ENCODE measurements at regions of chr1 and their contacts with region 1.

Region 1: DNA sequence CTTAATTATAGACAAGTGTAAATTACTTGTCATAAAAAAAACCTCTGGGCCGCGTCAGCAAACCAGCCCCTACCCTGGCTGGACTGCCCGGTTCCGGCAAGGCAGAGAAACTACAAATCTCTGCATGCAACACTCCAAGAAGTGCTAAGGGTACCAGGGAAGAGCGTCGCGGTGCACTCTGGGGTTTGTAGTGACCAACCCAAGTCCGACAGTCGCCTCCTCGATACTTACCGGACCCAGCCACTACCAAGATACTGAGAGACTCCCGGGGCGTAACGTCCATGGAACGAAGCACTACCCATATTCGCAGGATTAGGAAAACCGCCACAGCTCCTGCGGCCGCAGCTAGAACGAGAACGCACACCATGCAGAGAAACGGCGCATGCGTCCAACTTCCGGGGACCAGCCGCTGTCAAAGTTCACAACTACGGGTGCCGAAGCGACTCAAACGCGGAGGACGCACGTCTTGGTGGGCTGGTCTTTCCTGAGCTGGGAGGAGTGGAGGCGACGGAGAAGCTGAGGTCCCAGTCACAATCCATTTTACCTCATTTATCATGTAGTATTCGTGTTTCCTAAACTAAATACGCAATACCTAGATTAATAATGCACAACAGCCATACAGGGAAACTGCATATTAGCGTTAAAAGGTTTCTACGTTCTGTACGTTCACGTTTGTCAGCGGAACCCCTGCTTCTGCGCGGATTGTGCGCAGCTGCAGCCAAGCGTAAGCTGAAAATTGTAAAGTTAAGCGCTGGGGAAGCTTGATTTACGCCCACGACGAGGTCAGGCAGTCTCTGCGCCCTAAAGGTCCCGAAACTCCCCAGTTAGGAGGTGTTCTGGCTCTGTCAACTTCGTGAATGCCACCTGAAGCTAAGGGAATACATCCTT is at the start of gene ALG14:
- DNase-seq: peak; percentile 94
- ATAC-seq: peak; percentile 98
- H3K4me3 ChIP-seq: peak within 1 kb of the TSS; percentile 78 to 88
- H3K27ac ChIP-seq: peak within 1 kb of the TSS; percentile 74
- H3K4me1 ChIP-seq: peaks cover 0 to 12% of the 10 kb centered on the region in 2 experiments; a peak in 2 of 4 replicates
- H3K27me3 ChIP-seq: no peaks in the 10 kb centered on the region
- CTCF ChIP-seq: no peak
- POLR2A ChIP-seq: peak; percentile 74
- RAD21 ChIP-seq: no peak
- total RNA-seq, gene ALG14: 5.7 TPM

Region 2: DNA sequence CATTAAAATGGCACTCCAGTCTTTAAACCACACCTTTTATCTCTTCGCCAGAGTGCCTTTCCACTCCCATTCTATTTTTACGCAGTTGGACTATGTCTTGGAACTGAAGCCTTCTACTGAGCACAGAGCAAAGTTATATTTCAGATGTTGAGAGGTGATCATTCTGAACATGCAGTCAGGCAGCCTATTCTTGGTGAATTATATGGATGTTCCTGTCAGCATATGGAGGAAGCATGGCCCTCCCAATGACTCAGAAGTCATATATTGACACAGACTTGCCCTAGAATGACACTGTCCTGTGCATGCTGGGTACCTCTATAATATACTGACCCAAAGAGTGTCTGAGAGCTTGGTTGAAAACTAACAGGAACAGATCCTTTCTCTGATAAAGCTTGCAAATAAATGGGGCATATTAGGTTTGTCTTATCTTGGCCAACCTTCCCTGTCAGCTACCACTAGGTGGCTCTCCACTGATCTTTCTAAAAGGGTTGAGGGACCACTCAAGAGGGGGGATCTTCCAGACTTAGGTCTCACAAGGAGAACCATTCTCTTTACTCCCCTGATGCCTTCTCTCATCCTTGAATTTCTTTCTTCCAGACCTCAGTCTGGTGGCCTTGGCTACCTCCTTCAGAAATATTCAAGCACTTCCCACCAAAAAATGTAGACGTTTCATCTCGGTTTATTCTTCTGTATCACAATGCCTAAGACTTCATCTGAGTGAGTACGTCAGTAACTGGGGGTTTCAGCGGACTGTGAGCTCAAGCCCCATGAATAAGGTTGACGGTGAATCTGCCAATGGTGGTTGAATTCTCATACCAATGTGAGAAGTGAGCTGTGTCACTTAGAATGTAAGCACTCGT is 11.8 kb after region 1 on chr1:
- CTCF ChIA-PET with region 1: interaction called, 25 read pairs
- POLR2A ChIA-PET with region 1: no interaction called
- RAD21 ChIA-PET with region 1: no interaction called
- intact Hi-C with region 1: no loop called
- DNase-seq: peak; percentile 47
- ATAC-seq: peak; percentile 82
- H3K4me3 ChIP-seq: no peak overlapping the region
- H3K27ac ChIP-seq: no peak overlapping the region
- H3K4me1 ChIP-seq: peaks cover 8 to 16% of the 10 kb centered on the region in 2 experiments; a peak in 3 of 4 replicates
- H3K27me3 ChIP-seq: no peaks in the 10 kb centered on the region
- CTCF ChIP-seq: peak; percentile 67 to 88 (median 84); a peak in 5 of 6 replicates
- POLR2A ChIP-seq: no peak
- RAD21 ChIP-seq: peak; percentile 56